Astrocyte of the cerebellum (primary cell): ENCODE measurements at regions of chr10 and their contacts with region 1.

Region 1: DNA sequence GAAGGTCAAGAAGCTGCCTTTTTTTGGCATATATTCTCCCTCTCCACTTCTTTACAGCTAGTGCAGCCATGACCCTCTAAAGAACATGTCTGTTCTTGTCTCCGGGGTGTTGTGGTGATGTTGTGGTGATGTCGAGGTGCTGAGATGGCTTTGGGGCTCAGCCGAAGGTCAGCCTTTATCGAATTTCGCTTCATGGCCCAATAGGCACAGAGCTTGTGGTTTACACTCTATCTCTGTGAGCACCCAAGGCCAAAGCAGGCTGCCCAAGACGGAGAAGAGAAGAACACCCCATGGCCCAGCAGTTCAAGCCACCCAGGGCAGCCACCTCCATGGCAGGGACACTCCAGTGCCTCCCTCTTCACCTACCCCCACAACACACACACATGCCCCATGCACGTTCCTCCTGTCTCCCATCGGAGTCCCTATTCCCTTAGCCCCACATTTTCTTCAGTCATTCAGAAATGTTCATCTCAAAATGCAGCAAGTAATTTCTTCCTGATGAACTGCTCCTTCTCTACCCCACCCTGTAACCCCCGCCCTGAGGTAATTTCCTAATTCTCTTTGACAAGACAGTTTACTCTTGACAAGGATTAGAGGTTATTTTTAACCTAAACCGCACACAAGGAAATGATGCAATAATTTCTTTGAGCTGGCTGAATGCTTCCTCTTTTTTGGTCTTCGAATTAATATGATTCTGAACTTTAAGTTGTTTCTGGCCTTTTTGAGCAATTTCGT is 18.6 kb upstream of the ADRB1 start:
- DNase-seq: no peak
- H3K4me3 ChIP-seq: no peak overlapping the region
- CTCF ChIP-seq: no peak

Region 2: DNA sequence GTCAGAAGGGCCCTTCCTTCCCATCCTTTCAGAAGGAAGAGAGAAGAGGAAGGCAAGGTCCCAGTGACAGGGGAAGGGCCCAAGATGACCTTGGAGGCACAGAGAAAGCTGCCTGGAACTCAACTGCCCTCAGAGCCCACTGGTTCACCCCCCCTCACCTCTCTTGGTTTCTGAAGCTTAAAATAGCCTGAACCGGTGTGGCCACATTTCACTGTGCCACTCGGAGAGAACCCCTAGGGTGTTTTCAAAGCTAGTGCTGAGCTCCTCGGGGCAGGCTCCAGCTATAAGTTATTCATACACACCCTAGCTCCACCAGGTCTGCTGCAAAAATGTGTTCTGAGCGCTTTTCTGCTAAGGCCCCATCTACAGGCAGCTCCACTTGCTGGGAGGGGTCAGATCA is 42.3 kb before region 1 on chr10:
- in situ Hi-C with region 1: loop called (anchors 5 kb)
- DNase-seq: no peak
- H3K4me3 ChIP-seq: no peak overlapping the region
- CTCF ChIP-seq: no peak